PC-3 (cell line): ENCODE measurements at regions of chr4 and their contacts with region 1.

Region 1: DNA sequence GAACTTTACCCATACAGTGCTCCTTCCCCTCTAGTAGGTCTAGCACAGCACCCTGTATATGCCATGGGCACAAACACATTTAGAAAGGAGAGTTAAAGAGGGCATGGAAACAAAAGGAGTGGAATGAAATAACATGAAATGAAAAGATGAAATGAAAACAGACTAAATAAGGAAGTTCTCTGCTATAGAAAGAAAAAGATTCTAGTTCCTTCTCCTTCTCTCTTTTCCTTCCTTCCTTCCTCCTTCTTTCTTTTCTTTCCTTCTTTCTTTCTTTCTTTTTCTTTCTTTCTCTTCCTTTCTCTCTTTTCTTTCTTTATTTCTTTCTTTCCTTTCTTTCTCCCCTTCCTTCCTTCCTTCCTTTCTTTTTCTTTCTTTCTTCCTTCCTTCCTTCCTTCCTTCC is 2197.4 kb downstream of the PCDH7 start:
- DNase-seq: no peak
- ATAC-seq: no peak
- H3K4me3 ChIP-seq: no peak overlapping the region
- H3K27ac ChIP-seq: no peak overlapping the region
- H3K4me1 ChIP-seq: no peaks in the 10 kb centered on the region
- H3K27me3 ChIP-seq: no peaks in the 10 kb centered on the region
- CTCF ChIP-seq: no peak

Region 2: DNA sequence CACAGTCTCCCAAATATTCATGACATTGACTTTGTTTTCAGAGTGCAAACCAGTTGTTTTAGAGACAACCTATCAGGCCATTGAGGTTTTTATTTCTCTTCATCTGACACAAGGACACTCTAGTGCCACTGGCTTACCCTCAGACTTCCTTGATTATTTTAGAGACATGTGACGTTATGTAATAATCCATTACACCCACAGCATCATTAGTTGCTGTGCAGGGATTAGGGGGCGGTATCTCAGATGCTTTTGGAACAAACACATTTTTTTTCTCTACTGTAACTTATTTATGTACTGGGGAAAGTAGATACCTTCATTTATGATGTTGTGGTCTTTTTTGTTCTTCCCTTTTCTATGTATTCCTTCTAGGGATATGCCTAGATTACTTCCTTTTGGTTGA is 95.7 kb after region 1 on chr4:
- CTCF ChIA-PET with region 1: interaction called, 14 read pairs
- POLR2A ChIA-PET with region 1: no interaction called
- intact Hi-C with region 1: no loop called
- DNase-seq: no peak
- ATAC-seq: no peak
- H3K4me3 ChIP-seq: no peak overlapping the region
- H3K27ac ChIP-seq: no peak overlapping the region
- H3K4me1 ChIP-seq: no peaks in the 10 kb centered on the region
- H3K27me3 ChIP-seq: no peaks in the 10 kb centered on the region
- CTCF ChIP-seq: no peak